PC-3 (cell line): ENCODE measurements at regions of chr14 and their contacts with region 1.

Region 1: GRCh38 chr14:102096214-102097114 is 9.6 kb upstream of the HSP90AA1 start:
- DNase-seq: peak; percentile 85
- ATAC-seq: peak; percentile 87
- H3K4me3 ChIP-seq: no peak overlapping the region
- H3K27ac ChIP-seq: no peak overlapping the region
- H3K4me1 ChIP-seq: peaks cover 28% of the 10 kb centered on the region
- H3K27me3 ChIP-seq: no peaks in the 10 kb centered on the region
- CTCF ChIP-seq: peak; percentile 93

Region 2: DNA sequence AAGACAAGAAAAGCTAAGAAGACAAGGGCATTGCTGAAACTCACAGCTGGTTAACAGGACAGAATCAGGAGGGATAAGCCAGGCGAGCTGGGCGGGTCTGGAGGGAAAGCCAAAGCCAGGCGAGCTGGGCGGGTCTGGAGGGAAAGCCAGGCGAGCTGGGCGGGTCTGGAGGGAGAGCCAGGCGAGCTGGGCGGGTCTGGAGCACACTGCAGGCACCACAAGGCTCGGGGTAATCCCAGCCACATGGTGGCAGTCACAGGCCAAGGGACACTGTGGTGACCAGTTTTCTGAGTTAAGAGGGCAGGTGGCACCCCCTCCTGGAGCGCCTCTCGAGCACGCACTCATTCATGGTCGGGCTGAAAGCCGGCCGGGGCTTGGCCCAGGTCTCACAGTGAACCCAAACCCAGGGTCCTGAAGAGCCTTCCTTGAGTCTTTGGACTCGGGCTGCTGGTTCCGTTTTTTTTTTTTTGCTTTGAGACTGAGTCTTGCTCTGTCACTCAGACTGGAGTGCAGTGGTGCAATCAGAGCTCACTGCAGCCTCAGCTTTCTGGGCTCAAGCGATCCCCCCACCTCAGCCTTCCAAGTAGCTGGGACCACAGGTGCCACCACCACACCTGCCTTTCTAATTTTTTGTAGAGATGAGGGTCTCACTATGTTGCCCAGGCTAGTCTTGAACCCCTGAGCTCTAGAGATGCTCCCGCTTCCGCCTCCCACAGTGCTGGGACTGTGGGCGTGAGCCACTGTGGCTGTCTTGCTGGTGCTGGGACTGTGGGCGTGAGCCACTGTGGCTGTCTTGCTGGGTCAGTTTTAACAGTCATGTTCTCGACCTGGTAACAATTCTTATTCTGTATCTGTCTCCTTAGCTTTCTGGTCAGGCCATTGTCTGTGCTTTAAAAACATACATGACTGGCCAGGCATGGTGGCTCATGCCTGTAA is 49.9 kb before region 1 on chr14:
- CTCF ChIA-PET with region 1: interaction called, 7 read pairs
- POLR2A ChIA-PET with region 1: no interaction called
- intact Hi-C with region 1: loop called (anchors 1 kb)
- DNase-seq: peak; percentile 71
- ATAC-seq: peak; percentile 95
- H3K4me3 ChIP-seq: no peak overlapping the region
- H3K27ac ChIP-seq: no peak overlapping the region
- H3K4me1 ChIP-seq: no peaks in the 10 kb centered on the region
- H3K27me3 ChIP-seq: no peaks in the 10 kb centered on the region
- CTCF ChIP-seq: peak; percentile 63

Region 3: GRCh38 chr14:102063091-102063802 is 33.2 kb before region 1 on chr14:
- CTCF ChIA-PET with region 1: interaction called, 16 read pairs
- POLR2A ChIA-PET with region 1: interaction called, 4 read pairs
- intact Hi-C with region 1: loop called (anchors 1 kb)
- DNase-seq: peak; percentile 96
- ATAC-seq: peak; percentile 94
- H3K4me3 ChIP-seq: peak overlapping the region; percentile 43
- H3K27ac ChIP-seq: peak overlapping the region; percentile 31
- H3K4me1 ChIP-seq: peaks cover 8% of the 10 kb centered on the region
- H3K27me3 ChIP-seq: no peaks in the 10 kb centered on the region
- CTCF ChIP-seq: peak; percentile 69